ENCODE measurements at regions of chr17 and their contacts with region 1.

Region 1: GRCh38 chr17:15999439-16000350 is at the starts of genes TTC19 and ZSWIM7:
- DNase-seq: peak; percentile 94
- ATAC-seq: peak; percentile 94
- H3K4me3 ChIP-seq: peak within 1 kb of the TSS; percentile 84 to 94
- H3K27ac ChIP-seq: peak within 1 kb of the TSS; percentile 95
- H3K4me1 ChIP-seq: peaks cover 10 to 24% of the 10 kb centered on the region in 2 experiments; a peak in 3 of 4 replicates
- H3K27me3 ChIP-seq: no peaks in the 10 kb centered on the region
- CTCF ChIP-seq: no peak
- POLR2A ChIP-seq: peak; percentile 92
- RAD21 ChIP-seq: no peak
- total RNA-seq, gene TTC19: 61.3 TPM
- total RNA-seq, gene ZSWIM7: 33.5 TPM

Region 2: DNA sequence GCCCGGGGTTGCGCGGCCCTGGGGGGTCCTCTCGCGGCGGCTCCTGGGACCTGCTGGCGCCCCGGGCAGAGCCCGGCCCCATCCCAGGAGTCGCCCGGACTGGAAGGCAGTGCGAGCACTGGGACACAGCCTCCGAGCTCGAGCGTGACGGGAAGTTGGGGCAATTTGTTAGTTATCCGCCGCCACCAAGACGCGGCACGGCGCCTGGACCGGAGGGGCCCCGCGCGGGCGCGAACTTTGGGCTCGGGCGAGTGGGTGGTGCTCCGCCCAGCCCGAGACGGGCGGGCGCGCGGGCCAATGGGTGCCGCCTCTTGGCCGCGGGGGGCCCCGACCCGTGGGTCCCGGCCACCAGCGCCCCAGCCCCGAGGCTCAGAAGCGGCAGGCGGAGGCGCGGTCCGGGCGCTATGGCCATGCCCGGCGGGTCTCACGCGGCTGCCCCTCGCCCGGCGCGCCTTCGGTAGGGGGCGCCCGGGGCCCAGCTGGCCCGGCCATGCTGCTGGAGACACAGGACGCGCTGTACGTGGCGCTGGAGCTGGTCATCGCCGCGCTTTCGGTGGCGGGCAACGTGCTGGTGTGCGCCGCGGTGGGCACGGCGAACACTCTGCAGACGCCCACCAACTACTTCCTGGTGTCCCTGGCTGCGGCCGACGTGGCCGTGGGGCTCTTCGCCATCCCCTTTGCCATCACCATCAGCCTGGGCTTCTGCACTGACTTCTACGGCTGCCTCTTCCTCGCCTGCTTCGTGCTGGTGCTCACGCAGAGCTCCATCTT is 54.8 kb before region 1 on chr17 and contains the start of gene ADORA2B:
- CTCF ChIA-PET with region 1: interaction called, 13 read pairs
- POLR2A ChIA-PET with region 1: interaction called, 12 read pairs
- RAD21 ChIA-PET with region 1: interaction called in 1 of 2 experiments, 3 read pairs
- intact Hi-C with region 1: loop called (anchors 2 kb)
- DNase-seq: no peak
- ATAC-seq: peak; percentile 81
- H3K4me3 ChIP-seq: peak within 1 kb of the TSS; percentile 56 to 86
- H3K27ac ChIP-seq: peak within 1 kb of the TSS; percentile 92
- H3K4me1 ChIP-seq: peaks cover 17 to 55% of the 10 kb centered on the region in 2 experiments
- H3K27me3 ChIP-seq: no peaks in the 10 kb centered on the region
- CTCF ChIP-seq: peak; percentile 25 to 43 (median 43); a peak in 5 of 6 replicates
- POLR2A ChIP-seq: peak; percentile 20
- RAD21 ChIP-seq: peak; percentile 77
- total RNA-seq, gene ADORA2B: 47.5 TPM

Region 3: DNA sequence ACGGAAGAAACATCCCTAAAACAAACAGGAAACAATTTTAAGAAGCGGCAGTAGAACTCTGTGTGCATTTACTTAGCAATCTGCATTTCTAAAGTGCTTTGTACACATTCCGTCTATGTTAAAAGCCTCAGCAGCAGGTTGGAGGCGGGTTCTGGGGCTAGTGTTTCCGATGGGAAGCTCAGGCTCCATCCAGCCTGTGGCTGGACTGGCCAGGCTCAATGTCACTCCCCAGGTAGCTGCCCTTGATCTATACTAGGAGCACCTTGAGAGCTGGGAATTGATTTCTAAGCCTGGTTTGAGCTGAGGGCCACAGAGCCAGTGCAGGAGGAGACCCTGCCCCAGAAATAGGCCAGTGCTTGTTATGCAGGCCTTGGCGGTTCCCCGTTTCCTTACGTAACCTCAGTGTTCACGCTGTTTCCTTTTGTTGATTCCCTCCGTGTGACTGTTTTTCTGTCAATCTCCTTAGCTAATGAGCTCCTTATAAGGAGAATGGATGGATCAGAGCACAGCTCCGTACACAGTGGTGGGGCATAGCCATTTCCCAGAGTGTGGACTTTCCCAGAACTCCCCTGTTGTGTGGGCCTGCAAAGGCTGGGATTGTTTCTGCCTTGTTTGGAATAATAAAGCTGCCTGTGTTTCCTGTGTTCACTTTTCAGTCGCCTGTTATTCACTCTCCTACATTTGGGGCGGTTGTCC is 33.4 kb before region 1 on chr17:
- CTCF ChIA-PET with region 1: no interaction called
- POLR2A ChIA-PET with region 1: interaction called, 13 read pairs
- RAD21 ChIA-PET with region 1: no interaction called
- intact Hi-C with region 1: no loop called
- DNase-seq: no peak
- ATAC-seq: peak; percentile 15; the same call in 1 of the 2 replicates
- H3K4me3 ChIP-seq: peak overlapping the region in 1 of 2 experiments; percentile 31; a peak in 1 of 4 replicates
- H3K27ac ChIP-seq: peak overlapping the region; percentile 92
- H3K4me1 ChIP-seq: peaks cover 71 to 95% of the 10 kb centered on the region in 2 experiments
- H3K27me3 ChIP-seq: no peaks in the 10 kb centered on the region
- CTCF ChIP-seq: no peak
- POLR2A ChIP-seq: no peak
- RAD21 ChIP-seq: no peak

Region 4: GRCh38 chr17:16013943-16014407 is 14.3 kb after region 1 on chr17:
- CTCF ChIA-PET with region 1: no interaction called
- POLR2A ChIA-PET with region 1: interaction called, 14 read pairs
- RAD21 ChIA-PET with region 1: no interaction called
- intact Hi-C with region 1: no loop called
- DNase-seq: peak; percentile 36
- ATAC-seq: peak; percentile 87
- H3K4me3 ChIP-seq: no peak overlapping the region
- H3K27ac ChIP-seq: no peak overlapping the region
- H3K4me1 ChIP-seq: peaks cover 0 to 3% of the 10 kb centered on the region in 2 experiments; a peak in 1 of 4 replicates
- H3K27me3 ChIP-seq: no peaks in the 10 kb centered on the region
- CTCF ChIP-seq: peak in 2 of 3 experiments; percentile 67 to 69; a peak in 4 of 6 replicates
- POLR2A ChIP-seq: no peak
- RAD21 ChIP-seq: peak; percentile 33; the same call in 1 of the 2 replicates

Region 5: GRCh38 chr17:16304830-16305229 is 305.1 kb after region 1 on chr17:
- CTCF ChIA-PET with region 1: no interaction called
- POLR2A ChIA-PET with region 1: no interaction called
- RAD21 ChIA-PET with region 1: no interaction called
- intact Hi-C with region 1: no loop called
- DNase-seq: no peak
- ATAC-seq: peak; percentile 86
- H3K4me3 ChIP-seq: no peak overlapping the region
- H3K27ac ChIP-seq: no peak overlapping the region
- H3K4me1 ChIP-seq: peaks cover 7 to 14% of the 10 kb centered on the region in 2 experiments
- H3K27me3 ChIP-seq: no peaks in the 10 kb centered on the region
- CTCF ChIP-seq: peak; percentile 32 to 56 (median 51); a peak in 5 of 6 replicates
- POLR2A ChIP-seq: no peak
- RAD21 ChIP-seq: peak; percentile 62

Measured in HCT116 (cell line).